ENCODE measurements at regions of chr12 and their contacts with region 1.

Region 1: DNA sequence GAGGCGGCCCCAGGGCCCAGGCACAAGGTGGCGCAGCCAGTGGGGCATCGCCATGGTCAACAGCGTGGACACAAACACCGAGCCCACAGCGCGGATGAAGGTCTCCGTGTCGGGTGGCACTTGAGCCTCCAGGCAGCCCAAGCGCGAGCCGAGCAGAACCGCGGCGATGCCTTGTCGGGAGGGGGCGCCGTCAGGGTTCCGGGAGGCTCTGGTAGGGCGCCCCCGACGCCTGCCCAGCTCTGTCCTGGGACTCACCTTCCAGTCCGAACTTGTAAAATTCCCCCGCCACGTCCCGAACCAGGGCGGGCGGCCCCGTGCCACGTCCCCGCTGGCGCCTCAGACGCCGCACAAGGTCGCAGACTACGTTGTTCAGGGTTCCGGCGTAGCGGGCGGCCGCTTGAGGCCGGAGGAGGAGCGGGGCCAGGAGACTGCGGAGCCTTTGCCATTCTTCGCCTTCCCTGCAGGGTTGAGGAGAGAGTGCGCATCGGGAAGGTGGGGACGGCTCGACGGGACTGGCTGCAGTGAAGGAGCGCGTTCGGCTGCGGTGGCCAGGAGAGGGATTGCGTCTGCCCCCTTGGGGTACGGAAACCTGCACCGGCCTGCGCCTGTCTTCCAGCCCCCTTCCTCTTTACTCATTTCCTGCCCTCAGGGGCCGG is 1.7 kb downstream of the CYP27B1 start:
- DNase-seq: peak; percentile 73
- H3K4me3 ChIP-seq: peak overlapping the region; percentile 45 to 68 (median 58)
- H3K27ac ChIP-seq: peak overlapping the region; percentile 44
- H3K4me1 ChIP-seq: peaks cover 37% of the 10 kb centered on the region
- H3K27me3 ChIP-seq: no peaks in the 10 kb centered on the region
- CTCF ChIP-seq: peak; percentile 18 to 49

Region 2: DNA sequence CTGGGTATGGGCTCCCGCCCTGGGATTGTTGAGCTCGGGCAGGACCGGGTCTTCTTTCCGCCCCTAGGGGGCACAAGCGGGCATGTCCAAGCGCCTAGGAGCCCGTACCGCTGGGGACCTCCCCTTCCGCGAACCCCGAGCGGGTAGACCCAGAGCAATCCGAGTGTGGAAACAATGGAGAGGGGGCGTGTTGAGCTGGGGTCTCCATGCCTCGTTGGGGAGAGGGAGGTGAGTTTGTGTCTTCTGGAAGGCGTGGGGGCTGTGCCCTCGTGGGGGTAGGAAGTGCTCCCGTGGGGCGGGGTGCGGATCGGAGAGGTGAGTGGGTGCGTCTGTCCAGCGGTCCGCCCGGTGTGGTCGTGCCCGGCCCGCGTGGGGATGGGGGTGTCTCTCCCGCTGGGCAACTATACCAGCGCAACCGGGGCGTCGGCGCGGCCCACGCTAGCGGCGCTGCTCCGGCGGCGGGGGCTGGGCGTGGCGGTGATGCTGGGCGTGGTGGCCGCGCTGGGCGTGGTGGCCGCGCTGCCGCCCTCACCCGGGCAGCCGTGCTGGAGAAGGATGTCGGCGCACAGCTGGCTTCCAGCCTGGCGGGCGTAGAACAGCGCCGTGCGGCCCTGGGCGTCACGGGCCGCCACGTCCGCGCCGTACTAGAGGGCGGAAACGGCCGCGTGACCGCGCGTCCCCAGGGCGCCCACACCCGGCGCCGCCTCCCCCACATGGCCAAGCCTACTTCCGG is 38.9 kb before region 1 on chr12:
- CTCF ChIA-PET with region 1: no interaction called
- dilution Hi-C with region 1: no loop called
- in situ Hi-C with region 1: no loop called
- intact Hi-C with region 1: loop called (anchors 2 kb)
- DNase-seq: peak; percentile 73
- H3K4me3 ChIP-seq: peak overlapping the region; percentile 64 to 82 (median 81)
- H3K27ac ChIP-seq: peak overlapping the region; percentile 38
- H3K4me1 ChIP-seq: peaks cover 10% of the 10 kb centered on the region
- H3K27me3 ChIP-seq: no peaks in the 10 kb centered on the region
- CTCF ChIP-seq: peak; percentile 55 to 91

Region 3: GRCh38 chr12:57751788-57752667 is 13.1 kb before region 1 on chr12 and contains the start of gene CDK4:
- CTCF ChIA-PET with region 1: interaction called, 4 read pairs
- dilution Hi-C with region 1: no loop called
- in situ Hi-C with region 1: no loop called
- intact Hi-C with region 1: loop called (anchors 1 kb)
- DNase-seq: peak; percentile 99
- H3K4me3 ChIP-seq: peak within 1 kb of the TSS; percentile 69 to 89 (median 71)
- H3K27ac ChIP-seq: peak within 1 kb of the TSS; percentile 81
- H3K4me1 ChIP-seq: peaks cover 35% of the 10 kb centered on the region
- H3K27me3 ChIP-seq: no peaks in the 10 kb centered on the region
- CTCF ChIP-seq: no peak
- total RNA-seq, gene CDK4: 103 to 163 TPM